Activated T-helper 2 cell treated with anti-CD3 and anti-CD28 coated beads, Interferon-gamma antibody, Interleukin-2, Interleukin-4, amounts not matched to agents 10 μg/mL and 5 μg/mL and 100 μg/mL, durations not matched to agents 14 hours and 24 hours and 36 hours (primary cell): ENCODE measurements at regions of chr20 and their contacts with region 1.

Region 1: DNA sequence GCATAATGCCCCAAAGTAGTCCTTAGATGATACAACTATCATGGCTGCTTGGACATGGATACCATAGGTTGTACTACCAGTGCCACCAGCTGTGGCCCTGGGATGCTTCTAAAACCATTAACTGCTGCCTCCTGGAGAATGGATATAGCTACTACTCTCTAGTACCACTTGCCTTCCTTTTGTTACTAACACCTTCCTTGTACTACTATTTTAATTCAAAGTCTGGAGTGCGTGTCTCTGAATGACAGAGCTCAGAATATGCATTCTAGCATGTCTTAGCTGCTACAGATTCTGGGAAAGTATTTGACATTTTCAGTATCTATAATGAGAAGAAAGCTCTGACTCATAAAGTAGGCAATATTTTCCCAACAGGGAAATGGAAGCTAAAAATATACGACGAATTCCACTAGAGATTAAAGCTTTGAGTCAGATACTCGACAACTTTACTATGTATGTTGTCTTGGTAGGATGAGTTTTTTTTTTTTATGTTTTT is 112.3 kb downstream of the PFDN4 start:
- DNase-seq: no peak
- H3K4me3 Mint-ChIP-seq: no peak overlapping the region
- H3K27ac Mint-ChIP-seq: peak overlapping the region; percentile 26
- H3K4me1 Mint-ChIP-seq: peaks cover 11% of the 10 kb centered on the region
- H3K27me3 Mint-ChIP-seq: no peaks in the 10 kb centered on the region

Region 2: GRCh38 chr20:54368557-54368956 is 48.4 kb after region 1 on chr20:
- intact Hi-C with region 1: loop called (anchors 5 kb)
- DNase-seq: no peak
- H3K4me3 Mint-ChIP-seq: no peak overlapping the region
- H3K27ac Mint-ChIP-seq: no peak overlapping the region
- H3K4me1 Mint-ChIP-seq: peaks cover 2% of the 10 kb centered on the region
- H3K27me3 Mint-ChIP-seq: no peaks in the 10 kb centered on the region

Region 3: DNA sequence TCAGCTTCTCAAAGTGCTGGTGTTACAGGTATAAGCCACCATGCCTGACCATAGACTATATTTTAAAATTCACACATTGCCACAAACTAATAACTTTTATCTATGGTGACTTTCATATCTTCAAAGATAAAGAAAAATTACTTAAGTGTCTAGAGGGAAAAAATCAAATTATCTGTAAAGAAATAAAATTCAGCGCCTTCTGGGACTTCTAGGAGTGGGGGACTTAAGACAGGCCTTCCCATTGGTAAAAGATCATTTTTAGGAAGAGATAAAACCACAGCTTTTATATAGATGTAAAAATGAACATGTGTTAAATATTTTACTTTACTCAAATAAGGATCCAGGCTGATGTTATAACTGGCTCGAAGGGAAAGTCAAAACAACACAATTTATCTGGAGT is 121.4 kb after region 1 on chr20:
- intact Hi-C with region 1: no loop called
- DNase-seq: no peak
- H3K4me3 Mint-ChIP-seq: no peak overlapping the region
- H3K27ac Mint-ChIP-seq: no peak overlapping the region
- H3K4me1 Mint-ChIP-seq: no peaks in the 10 kb centered on the region
- H3K27me3 Mint-ChIP-seq: no peaks in the 10 kb centered on the region

Region 4: DNA sequence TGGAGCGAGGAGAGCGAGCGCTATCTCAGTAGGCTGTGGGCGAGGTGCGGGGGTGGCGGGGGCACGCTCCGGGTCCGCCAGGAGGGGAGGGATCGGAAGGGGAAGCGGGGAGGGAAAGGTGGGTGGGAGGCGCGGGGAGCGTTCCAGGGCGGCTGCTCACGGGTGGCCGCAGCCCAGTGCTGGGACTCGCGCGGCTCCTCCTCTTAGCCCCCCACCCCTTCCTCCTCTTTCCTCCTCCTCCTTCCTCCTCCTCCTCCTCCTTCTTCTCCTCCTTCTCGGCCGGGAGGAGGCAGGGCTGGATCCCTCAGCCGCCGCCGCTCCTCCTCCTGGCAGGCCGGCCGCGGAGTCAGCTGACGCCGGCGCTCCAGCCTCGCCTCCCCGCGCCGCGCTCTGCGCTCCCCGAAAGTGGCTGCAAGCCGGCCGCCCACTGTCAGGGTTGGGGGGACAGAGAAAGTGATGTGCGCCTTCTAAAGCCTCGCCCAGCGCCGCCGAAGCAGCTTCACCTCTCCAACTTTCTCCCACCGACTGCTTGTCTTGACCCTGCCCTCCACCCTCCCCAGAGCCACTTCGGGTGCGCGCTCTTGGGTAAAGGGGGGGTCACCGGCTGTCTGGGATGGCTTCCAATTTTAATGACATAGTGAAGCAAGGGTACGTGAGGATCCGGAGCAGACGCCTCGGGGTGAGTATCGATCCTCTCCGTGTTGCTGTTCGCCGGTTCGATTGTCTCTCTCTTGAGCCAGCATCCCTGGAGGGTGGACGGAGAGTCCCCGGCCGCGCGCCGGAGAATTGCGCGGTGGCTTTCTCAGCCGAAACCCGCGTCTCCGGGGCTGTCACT is 155.4 kb after region 1 on chr20 and contains the start of gene DOK5:
- intact Hi-C with region 1: loop called (anchors 10 kb)
- DNase-seq: no peak
- H3K4me3 Mint-ChIP-seq: peak within 1 kb of the TSS; percentile 65
- H3K27ac Mint-ChIP-seq: peak within 1 kb of the TSS; percentile 18
- H3K4me1 Mint-ChIP-seq: peaks cover 17% of the 10 kb centered on the region
- H3K27me3 Mint-ChIP-seq: peaks cover 41% of the 10 kb centered on the region
- total RNA-seq, gene DOK5: 2.9 and 4.7 TPM in 2 replicates

Region 5: DNA sequence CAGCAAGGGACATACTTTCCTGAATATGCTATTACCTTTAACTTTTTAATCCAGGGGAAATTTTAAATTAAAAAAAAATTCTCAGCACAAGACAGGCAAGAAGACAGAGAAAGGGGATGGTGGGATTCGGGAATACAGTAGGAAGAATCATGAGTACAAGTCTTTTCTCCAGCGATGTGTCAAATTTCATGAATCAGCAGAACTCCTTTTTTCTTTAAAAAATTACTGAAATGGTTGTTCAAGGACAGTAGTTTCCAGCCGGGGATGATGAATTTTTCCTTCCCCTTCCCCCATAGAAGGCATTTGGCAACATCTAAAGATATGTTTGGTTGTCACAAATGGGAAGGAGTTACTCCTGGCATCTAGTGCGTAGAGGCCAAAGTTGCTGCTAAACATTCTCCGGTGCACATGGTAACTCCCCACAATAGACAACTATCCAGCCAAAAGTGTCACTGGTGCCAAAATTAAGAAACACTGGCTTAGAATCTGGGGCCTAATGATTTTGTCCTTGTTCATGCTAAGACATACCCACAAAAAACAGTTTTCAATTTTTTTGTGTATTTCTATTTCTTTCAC is 1235.0 kb after region 1 on chr20:
- intact Hi-C with region 1: no loop called
- DNase-seq: no peak
- H3K4me3 Mint-ChIP-seq: no peak overlapping the region
- H3K27ac Mint-ChIP-seq: no peak overlapping the region
- H3K4me1 Mint-ChIP-seq: no peaks in the 10 kb centered on the region
- H3K27me3 Mint-ChIP-seq: no peaks in the 10 kb centered on the region